SK-N-SH (cell line): ENCODE measurements at regions of chr20 and their contacts with region 1.

Region 1: DNA sequence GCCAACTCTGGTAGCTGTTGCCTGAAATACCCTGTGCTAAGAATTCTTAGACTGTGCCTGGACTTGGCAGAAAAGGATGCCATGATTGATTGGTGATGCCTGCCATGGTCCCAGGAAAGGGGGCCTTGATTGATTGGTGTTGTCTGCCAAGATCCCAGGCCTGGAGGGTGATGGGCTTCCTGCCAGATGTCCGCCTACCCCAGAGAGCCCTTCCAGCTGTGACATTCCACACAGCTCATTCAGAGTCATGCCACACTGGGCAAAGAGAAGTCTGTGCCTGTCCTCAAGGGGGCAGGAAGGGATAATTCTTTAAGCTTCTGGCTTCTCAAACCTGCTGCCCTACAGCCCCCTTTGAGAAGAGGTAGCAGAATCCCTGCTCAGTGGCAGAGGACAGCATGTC is 24.6 kb downstream of the RIMS4 start:
- DNase-seq: peak; percentile 84
- H3K4me3 ChIP-seq: no peak overlapping the region
- H3K27ac ChIP-seq: peak overlapping the region in 1 of 2 experiments; percentile 47; a peak in 2 of 4 replicates
- H3K4me1 ChIP-seq: peaks cover 0 to 12% of the 10 kb centered on the region in 2 experiments; a peak in 1 of 4 replicates
- H3K27me3 ChIP-seq: no peaks in the 10 kb centered on the region
- CTCF ChIP-seq: peak; percentile 21; the same call in 1 of the 2 replicates
- EP300 ChIP-seq: peak in 1 of 2 experiments; percentile 68; a peak in 1 of 4 replicates
- RAD21 ChIP-seq: peak; percentile 85

Region 2: DNA sequence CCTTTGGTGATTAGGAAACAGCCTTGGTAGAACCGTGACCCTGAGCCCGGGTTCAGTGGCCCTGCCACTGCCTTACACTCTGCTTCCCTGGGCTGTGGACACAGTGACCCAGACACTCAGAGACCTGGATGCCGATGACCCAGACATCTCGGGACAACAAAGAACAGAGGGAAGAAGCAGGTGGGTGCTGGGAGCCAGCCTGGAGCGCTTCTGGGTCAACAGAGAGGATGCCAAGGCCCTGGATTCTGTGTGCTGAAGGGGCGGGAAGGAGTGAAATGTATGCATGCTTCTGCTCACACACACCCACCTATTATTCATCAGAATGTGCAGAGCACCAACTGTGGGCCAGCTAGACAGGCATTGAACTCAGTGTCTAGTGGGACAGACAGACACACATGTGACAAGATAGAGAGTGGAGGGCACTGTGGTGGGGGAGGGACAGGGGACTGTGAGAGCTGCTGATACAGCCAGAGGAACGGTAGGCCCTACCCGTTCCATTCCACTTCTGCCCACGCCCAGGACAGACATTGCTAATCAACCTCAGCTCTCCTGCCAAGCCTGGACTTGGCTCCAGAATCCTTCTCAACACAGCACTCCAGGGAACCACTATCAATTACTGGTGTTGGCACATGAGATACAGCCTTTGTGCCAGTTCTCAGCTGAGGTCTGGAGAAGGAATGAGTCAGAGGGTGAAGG is 20.0 kb before region 1 on chr20:
- CTCF ChIA-PET with region 1: interaction called, 10 read pairs
- POLR2A ChIA-PET with region 1: no interaction called
- DNase-seq: no peak
- H3K4me3 ChIP-seq: no peak overlapping the region
- H3K27ac ChIP-seq: peak overlapping the region in 1 of 2 experiments; percentile 50; a peak in 2 of 4 replicates
- H3K4me1 ChIP-seq: peaks cover 0 to 43% of the 10 kb centered on the region in 2 experiments; a peak in 2 of 4 replicates
- H3K27me3 ChIP-seq: peaks cover 26% of the 10 kb centered on the region; the same call in 1 of the 2 replicates
- CTCF ChIP-seq: no peak
- EP300 ChIP-seq: no peak
- RAD21 ChIP-seq: no peak

Region 3: GRCh38 chr20:44805979-44806620 is 20.3 kb after region 1 on chr20:
- CTCF ChIA-PET with region 1: interaction called, 19 read pairs
- POLR2A ChIA-PET with region 1: interaction called, 5 read pairs
- DNase-seq: peak; percentile 91
- H3K4me3 ChIP-seq: no peak overlapping the region
- H3K27ac ChIP-seq: peak overlapping the region in 1 of 2 experiments; percentile 90; a peak in 2 of 4 replicates
- H3K4me1 ChIP-seq: peaks cover 0 to 68% of the 10 kb centered on the region in 2 experiments; a peak in 2 of 4 replicates
- H3K27me3 ChIP-seq: peaks cover 34% of the 10 kb centered on the region
- CTCF ChIP-seq: no peak
- EP300 ChIP-seq: peak in 1 of 2 experiments; percentile 66; a peak in 1 of 4 replicates
- RAD21 ChIP-seq: no peak

Region 4: DNA sequence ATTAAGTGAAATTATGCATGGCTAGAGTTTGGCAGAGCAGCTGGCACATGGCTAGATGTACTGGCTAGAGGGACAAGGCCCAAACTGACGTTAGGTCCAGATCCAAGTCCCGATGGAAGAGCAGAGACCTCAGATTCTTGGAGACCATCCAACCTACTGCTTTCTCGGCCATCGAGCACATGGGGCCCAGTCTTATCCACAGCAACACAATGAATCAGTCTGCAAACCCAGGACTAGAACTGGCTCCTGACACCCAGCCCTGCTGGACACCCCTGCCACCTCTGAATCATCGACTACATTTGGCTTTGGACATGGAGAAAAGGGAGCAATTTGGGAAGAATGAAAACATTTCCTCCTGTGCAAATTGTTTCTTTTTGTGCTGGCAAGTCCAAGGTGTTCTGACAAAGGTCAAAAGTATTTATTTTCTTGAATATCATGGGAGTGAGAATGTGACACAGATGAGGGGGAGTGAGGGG is 75.8 kb after region 1 on chr20:
- CTCF ChIA-PET with region 1: interaction called, 64 read pairs
- POLR2A ChIA-PET with region 1: interaction called, 4 read pairs
- DNase-seq: no peak
- H3K4me3 ChIP-seq: no peak overlapping the region
- H3K27ac ChIP-seq: 0 out of 4 replicates have a peak overlapping the region, but pooled peaks of 1 of the 2 experiments have one; percentile 12
- H3K4me1 ChIP-seq: peaks cover 0 to 10% of the 10 kb centered on the region in 2 experiments; a peak in 1 of 4 replicates
- H3K27me3 ChIP-seq: no peaks in the 10 kb centered on the region
- CTCF ChIP-seq: no peak
- EP300 ChIP-seq: no peak
- RAD21 ChIP-seq: no peak